ENCODE measurements at regions of chr14 and their contacts with region 1.

Region 1: DNA sequence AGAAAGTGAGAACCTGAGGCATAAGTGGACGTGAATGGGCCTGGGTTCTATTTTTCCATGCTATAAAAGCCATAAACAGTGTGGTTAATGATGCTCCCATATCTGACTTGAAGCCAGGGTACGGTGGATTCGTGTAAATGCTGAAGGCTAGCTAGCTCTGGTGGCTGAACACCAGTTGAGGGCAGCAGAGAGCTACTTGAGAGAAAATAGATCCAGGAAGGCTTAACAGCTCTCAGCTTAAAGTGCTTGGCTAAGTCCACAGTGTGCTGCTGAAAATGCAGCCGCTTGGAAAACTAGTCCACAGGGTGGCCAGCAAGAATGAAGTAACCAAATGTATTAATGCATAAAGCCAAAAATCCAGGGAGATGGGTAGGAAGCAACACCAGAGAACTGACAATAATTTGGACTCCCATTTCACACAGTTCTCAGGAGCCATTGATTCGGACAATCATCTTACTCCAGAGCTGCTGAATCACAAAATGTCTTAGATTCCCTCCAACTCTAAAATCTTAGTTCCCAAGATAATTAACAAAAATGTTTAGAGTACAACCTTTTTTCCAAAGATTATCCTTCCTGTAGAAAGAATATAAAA is 15.0 kb upstream of the FOXG1 start:
- DNase-seq: peak; percentile 54 to 56
- H3K4me3 ChIP-seq: no peak overlapping the region
- H3K27ac ChIP-seq: no peak overlapping the region
- H3K4me1 ChIP-seq: no peaks in the 10 kb centered on the region
- H3K27me3 ChIP-seq: peaks cover 14% of the 10 kb centered on the region
- CTCF ChIP-seq: peak in 2 of 6 experiments; percentile 51 to 66
- POLR2A ChIP-seq: no peak

Region 2: GRCh38 chr14:29536886-29537511 is 785.4 kb after region 1 on chr14:
- intact Hi-C with region 1: loop called (anchors 10 kb)
- DNase-seq: no peak
- H3K4me3 ChIP-seq: no peak overlapping the region
- H3K27ac ChIP-seq: no peak overlapping the region
- H3K4me1 ChIP-seq: no peaks in the 10 kb centered on the region
- H3K27me3 ChIP-seq: no peaks in the 10 kb centered on the region
- CTCF ChIP-seq: peak in 3 of 6 experiments; percentile 15 to 53 (median 37)
- POLR2A ChIP-seq: no peak